ENCODE measurements at regions of chr13 and their contacts with region 1.

Region 1: GRCh38 chr13:24727731-24728601 is 36.0 kb upstream of the RNF17 start:
- DNase-seq: peak; percentile 84
- ATAC-seq: peak; percentile 100
- H3K4me3 ChIP-seq: no peak overlapping the region
- H3K27ac ChIP-seq: no peak overlapping the region
- H3K4me1 ChIP-seq: no peaks in the 10 kb centered on the region
- H3K27me3 ChIP-seq: peaks cover 5% of the 10 kb centered on the region
- CTCF ChIP-seq: peak; percentile 93
- POLR2A ChIP-seq: no peak
- RAD21 ChIP-seq: peak; percentile 71

Region 2: GRCh38 chr13:24574847-24575246 is 153.1 kb before region 1 on chr13:
- CTCF ChIA-PET with region 1: no interaction called
- POLR2A ChIA-PET with region 1: no interaction called
- dilution Hi-C with region 1: no loop called
- in situ Hi-C with region 1: no loop called
- intact Hi-C with region 1: loop called (anchors 1 kb)
- DNase-seq: no peak
- ATAC-seq: no peak
- H3K4me3 ChIP-seq: no peak overlapping the region
- H3K27ac ChIP-seq: no peak overlapping the region
- H3K4me1 ChIP-seq: no peaks in the 10 kb centered on the region
- H3K27me3 ChIP-seq: no peaks in the 10 kb centered on the region
- CTCF ChIP-seq: no peak
- POLR2A ChIP-seq: no peak
- RAD21 ChIP-seq: no peak

Region 3: DNA sequence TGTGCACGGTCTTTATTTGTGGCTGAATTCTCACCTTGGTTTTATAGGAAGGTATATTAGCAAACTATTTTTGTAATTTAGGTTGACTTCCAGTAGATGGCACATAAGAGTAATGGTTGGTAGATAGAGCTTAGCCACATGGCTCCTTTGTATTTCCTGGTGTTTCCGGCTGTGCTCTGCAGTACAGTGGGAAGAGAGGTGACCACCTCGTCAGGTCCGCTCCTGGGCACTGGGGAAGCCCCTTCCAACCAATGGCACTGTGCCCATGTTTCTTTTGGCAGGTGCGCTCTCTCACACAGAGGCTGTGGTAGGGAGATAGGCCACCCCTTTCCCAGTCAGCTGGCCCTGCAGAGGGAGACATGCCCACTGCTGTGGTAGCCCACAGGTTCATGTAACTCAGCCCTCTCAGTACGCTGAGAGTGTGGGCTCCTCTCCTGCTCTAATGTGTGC is 122.0 kb before region 1 on chr13:
- CTCF ChIA-PET with region 1: interaction called, 4 read pairs
- POLR2A ChIA-PET with region 1: no interaction called
- dilution Hi-C with region 1: no loop called
- in situ Hi-C with region 1: no loop called
- intact Hi-C with region 1: loop called (anchors 1 kb)
- DNase-seq: peak; percentile 11
- ATAC-seq: peak; percentile 71
- H3K4me3 ChIP-seq: no peak overlapping the region
- H3K27ac ChIP-seq: no peak overlapping the region
- H3K4me1 ChIP-seq: no peaks in the 10 kb centered on the region
- H3K27me3 ChIP-seq: 0 out of 2 replicates have a peak, but pooled peaks cover 2% of the 10 kb centered on the region
- CTCF ChIP-seq: peak; percentile 31
- POLR2A ChIP-seq: no peak
- RAD21 ChIP-seq: 0 out of 2 replicates have a peak, but pooled peaks have one; percentile 10

Region 4: DNA sequence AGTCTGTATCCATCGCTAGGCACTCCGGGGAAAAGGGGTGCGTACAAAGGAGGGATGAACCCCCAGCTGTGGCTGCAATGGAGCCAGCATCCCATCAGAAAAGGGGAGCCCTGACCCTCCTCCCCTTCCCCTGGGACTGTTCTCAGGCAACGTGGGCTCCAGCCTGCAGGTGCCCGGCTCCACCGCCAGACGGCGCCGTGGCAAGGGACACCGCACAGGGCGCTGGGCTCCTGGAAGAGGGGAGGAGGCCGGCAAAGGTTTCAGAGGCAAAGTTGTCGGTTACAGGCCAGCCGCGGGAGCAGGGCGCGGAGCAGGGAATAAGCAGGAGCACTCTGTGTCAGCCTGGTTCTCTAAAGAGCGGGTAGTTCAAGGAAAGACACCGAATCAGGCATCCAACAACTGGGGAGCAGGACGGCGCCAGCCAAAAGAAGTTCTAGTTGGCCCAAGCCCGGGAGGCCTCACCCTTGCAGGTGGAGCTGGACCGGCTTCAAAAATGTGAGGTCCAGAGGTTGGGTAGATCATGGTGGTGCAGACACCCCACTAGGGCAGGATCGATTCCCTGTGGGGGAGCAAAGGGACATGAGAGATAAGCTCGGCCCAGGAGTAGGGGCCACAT is 100.8 kb before region 1 on chr13:
- CTCF ChIA-PET with region 1: no interaction called
- POLR2A ChIA-PET with region 1: no interaction called
- dilution Hi-C with region 1: no loop called
- in situ Hi-C with region 1: no loop called
- intact Hi-C with region 1: no loop called
- DNase-seq: no peak
- ATAC-seq: peak; percentile 28; the same call in 1 of the 2 replicates
- H3K4me3 ChIP-seq: no peak overlapping the region
- H3K27ac ChIP-seq: no peak overlapping the region
- H3K4me1 ChIP-seq: peaks cover 2% of the 10 kb centered on the region; the same call in 1 of the 2 replicates
- H3K27me3 ChIP-seq: no peaks in the 10 kb centered on the region
- CTCF ChIP-seq: peak; percentile 33
- POLR2A ChIP-seq: no peak
- RAD21 ChIP-seq: no peak

Region 5: GRCh38 chr13:24638096-24638495 is 89.9 kb before region 1 on chr13:
- CTCF ChIA-PET with region 1: no interaction called
- POLR2A ChIA-PET with region 1: no interaction called
- dilution Hi-C with region 1: no loop called
- in situ Hi-C with region 1: no loop called
- intact Hi-C with region 1: no loop called
- DNase-seq: no peak
- ATAC-seq: no peak
- H3K4me3 ChIP-seq: no peak overlapping the region
- H3K27ac ChIP-seq: no peak overlapping the region
- H3K4me1 ChIP-seq: no peaks in the 10 kb centered on the region
- H3K27me3 ChIP-seq: peaks cover 5% of the 10 kb centered on the region
- CTCF ChIP-seq: no peak
- POLR2A ChIP-seq: no peak
- RAD21 ChIP-seq: no peak

Region 6: DNA sequence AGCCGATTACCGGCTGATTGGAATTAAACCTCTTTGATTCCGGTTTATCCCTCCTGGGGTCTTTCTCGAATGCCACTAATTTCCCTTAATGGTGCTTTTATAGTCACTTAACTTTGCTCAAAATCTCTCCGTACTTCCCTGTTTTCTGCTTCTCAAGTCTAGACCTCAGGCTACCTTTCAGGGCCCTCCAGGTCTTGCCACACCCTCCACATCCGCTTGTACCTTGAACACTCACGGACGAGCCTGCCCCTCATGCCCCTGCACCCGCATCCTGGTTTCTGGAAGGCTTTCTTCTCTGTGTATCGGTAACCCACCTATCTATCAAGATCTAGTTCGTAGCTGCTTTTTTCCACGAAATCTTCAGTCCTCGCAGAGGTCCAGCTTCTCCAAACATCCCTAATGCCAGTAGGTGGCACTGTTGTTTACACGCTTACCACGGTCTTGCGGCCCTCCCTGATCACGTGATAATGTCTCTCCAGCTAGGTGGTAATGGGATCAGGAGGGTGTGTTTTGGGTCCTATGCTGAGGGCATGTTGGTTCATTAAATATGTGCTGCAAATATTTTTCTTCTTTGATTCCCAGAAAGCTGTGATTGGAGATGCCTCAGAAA is 34.0 kb before region 1 on chr13:
- CTCF ChIA-PET with region 1: no interaction called
- POLR2A ChIA-PET with region 1: no interaction called
- dilution Hi-C with region 1: no loop called
- in situ Hi-C with region 1: no loop called
- intact Hi-C with region 1: loop called (anchors 5 kb)
- DNase-seq: peak; percentile 55
- ATAC-seq: peak; percentile 54; the same call in 1 of the 2 replicates
- H3K4me3 ChIP-seq: no peak overlapping the region
- H3K27ac ChIP-seq: no peak overlapping the region
- H3K4me1 ChIP-seq: no peaks in the 10 kb centered on the region
- H3K27me3 ChIP-seq: peaks cover 10% of the 10 kb centered on the region
- CTCF ChIP-seq: peak; percentile 49
- POLR2A ChIP-seq: no peak
- RAD21 ChIP-seq: peak; percentile 53

Measured in IMR-90 (cell line).